ENCODE measurements at regions of chr17 and their contacts with region 1.

Region 1: DNA sequence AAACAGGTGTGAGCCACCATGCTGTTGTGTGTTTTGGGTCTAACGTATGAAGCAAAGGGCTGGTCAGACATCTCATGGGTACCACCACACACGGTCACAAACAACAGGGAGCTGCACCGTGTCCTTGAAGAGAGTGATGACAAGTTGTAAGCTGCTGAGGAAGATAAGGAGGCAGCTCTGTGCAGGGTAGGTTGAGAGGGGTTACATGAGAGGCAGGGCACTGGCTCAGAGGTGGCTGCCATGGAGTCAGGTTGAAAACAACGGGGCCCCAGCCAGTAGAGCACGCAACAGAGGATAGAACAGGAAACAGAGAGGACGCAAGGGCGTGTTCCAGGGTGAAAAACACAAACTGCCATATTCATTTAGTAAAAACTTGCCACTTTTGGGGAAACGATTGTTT is 52.2 kb downstream of the TRARG1 start:
- DNase-seq: peak in 4 of 5 donors; percentile 29 to 74 (median 58)
- ATAC-seq: peak; percentile 98
- H3K4me3 ChIP-seq: no peak overlapping the region
- H3K27ac ChIP-seq: no peak overlapping the region
- H3K4me1 ChIP-seq: peaks cover 0 to 17% (median 7%) of the 10 kb centered on the region in 12 donors
- H3K27me3 ChIP-seq: no peaks in the 10 kb centered on the region
- CTCF ChIP-seq: no peak
- POLR2A ChIP-seq: no peak

Region 2: GRCh38 chr17:1227917-1228780 is 103.6 kb before region 1 on chr17:
- intact Hi-C with region 1: no loop called
- DNase-seq: peak in 3 of 5 donors; percentile 29 to 71 (median 70)
- ATAC-seq: peak in 3 of 4 donors; percentile 5 to 15 (median 5)
- H3K4me3 ChIP-seq: peak overlapping the region; percentile 32 to 74 (median 54)
- H3K27ac ChIP-seq: peak overlapping the region in 3 of 12 donors; percentile 25 to 84 (median 67)
- H3K4me1 ChIP-seq: peaks cover 0 to 40% (median 16%) of the 10 kb centered on the region in 12 donors
- H3K27me3 ChIP-seq: peaks cover 9 to 53% (median 26%) of the 10 kb centered on the region in 9 donors
- CTCF ChIP-seq: no peak
- POLR2A ChIP-seq: no peak

Region 3: DNA sequence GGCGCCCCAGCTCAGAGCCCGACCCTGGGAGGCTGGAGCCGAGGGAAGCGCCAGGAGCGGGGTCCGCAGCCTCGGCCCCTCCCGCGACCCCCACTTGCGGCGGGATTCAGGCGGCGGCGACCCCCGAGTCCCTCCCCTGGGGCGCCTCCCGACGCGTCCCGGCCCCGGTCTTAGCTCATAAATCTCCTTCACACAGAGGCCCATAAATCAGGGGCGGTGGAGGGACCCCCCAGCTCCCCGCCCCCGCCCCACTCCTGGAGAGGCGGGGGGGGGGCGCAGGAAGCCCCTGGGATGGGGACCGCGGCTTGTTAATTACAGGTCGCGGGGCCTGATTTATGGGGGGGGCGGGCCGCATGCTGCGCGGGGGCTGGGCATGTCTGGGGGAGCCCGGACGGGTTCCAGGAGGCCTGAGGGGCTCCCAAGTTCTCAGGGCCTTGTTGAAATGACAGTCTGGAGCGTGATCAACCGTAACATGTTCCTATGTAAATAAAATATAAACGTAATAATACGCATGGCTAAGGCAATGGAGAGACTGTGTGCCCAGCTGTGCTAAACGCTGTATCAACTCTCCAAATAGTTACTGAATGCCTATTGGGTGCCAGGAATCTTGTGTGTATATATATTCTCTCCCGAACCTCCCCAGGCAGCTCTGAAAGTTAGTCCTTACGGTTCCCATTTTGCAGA is 71.5 kb before region 1 on chr17:
- intact Hi-C with region 1: loop called in 4 of 10 experiments (anchors 1 to 5 kb)
- DNase-seq: no peak
- ATAC-seq: peak in 1 of 4 donors; percentile 19
- H3K4me3 ChIP-seq: peak overlapping the region; percentile 9 to 66 (median 51)
- H3K27ac ChIP-seq: peak overlapping the region in 2 of 12 donors; percentile 40 to 77
- H3K4me1 ChIP-seq: peaks cover 0 to 21% (median 8%) of the 10 kb centered on the region in 12 donors
- H3K27me3 ChIP-seq: peaks cover 0 to 12% (median 0%) of the 10 kb centered on the region in 9 donors
- CTCF ChIP-seq: no peak
- POLR2A ChIP-seq: no peak

Region 4: DNA sequence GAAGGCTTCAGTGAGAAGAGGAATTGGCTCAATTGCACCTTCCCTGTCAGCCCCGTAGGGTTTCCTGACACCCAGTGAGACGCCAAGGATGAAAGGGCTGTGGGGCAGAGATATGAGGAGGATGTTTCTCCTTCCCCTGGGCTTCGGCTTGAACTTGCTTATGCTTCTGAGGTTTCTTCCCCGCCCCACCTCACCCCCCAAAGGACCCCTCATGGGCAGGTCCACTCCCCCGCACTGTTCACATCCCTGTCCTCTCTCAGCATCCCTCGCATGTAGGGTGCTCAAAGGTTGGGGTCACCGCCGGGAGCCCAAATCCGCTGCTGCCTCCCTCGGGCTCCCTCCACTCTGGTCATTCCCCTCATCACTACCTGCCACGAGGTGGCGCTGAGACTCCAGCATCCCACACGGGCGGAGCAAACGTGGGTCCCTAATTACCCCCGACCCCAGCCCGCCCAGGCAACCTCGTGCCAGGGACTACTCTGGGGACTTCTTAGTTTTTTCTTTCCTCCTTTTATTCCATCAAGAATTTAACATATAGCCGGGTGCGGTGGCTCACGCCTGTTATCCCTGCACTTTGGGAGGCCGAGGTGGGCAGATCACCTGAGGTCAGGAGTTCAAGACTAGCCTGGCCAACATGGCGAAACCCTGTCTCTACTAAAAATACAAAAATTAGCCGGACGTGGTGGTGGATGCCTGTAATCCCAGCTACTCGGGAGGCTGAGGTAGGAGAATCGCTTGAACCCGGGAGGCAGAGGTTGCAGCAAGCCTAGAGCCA is 55.6 kb before region 1 on chr17:
- intact Hi-C with region 1: loop called (anchors 1 to 5 kb)
- DNase-seq: peak; percentile 48 to 85 (median 62)
- ATAC-seq: peak; percentile 72 to 83 (median 77)
- H3K4me3 ChIP-seq: no peak overlapping the region
- H3K27ac ChIP-seq: no peak overlapping the region
- H3K4me1 ChIP-seq: peaks cover 0 to 8% (median 0%) of the 10 kb centered on the region in 12 donors
- H3K27me3 ChIP-seq: peaks cover 0 to 24% (median 9%) of the 10 kb centered on the region in 9 donors
- CTCF ChIP-seq: peak; percentile 72 to 88 (median 80)
- POLR2A ChIP-seq: no peak

Measured in heart left ventricle (tissue), 16 donors.